Activated CD8-positive, alpha-beta T cell treated with anti-CD3 and anti-CD28 coated beads, Interleukin-2, amount 10 ng/mL, durations not matched to agents 7 days and 5 days (primary cell): ENCODE measurements at regions of chr1 and their contacts with region 1.

Region 1: GRCh38 chr1:36516372-36517325 is 33.9 kb upstream of the CSF3R start:
- DNase-seq: peak; percentile 57
- ATAC-seq: peak; percentile 72
- H3K4me3 Mint-ChIP-seq: no peak overlapping the region
- H3K27ac Mint-ChIP-seq: no peak overlapping the region
- H3K4me1 Mint-ChIP-seq: peaks cover 14% of the 10 kb centered on the region
- H3K27me3 Mint-ChIP-seq: no peaks in the 10 kb centered on the region

Region 2: GRCh38 chr1:36486436-36487335 is 30.0 kb before region 1 on chr1:
- CTCF ChIA-PET with region 1: interaction called, 15 read pairs
- POLR2A ChIA-PET with region 1: no interaction called
- DNase-seq: no peak
- ATAC-seq: no peak
- H3K4me3 Mint-ChIP-seq: no peak overlapping the region
- H3K27ac Mint-ChIP-seq: no peak overlapping the region
- H3K4me1 Mint-ChIP-seq: peaks cover 7% of the 10 kb centered on the region
- H3K27me3 Mint-ChIP-seq: peaks cover 17% of the 10 kb centered on the region

Region 3: DNA sequence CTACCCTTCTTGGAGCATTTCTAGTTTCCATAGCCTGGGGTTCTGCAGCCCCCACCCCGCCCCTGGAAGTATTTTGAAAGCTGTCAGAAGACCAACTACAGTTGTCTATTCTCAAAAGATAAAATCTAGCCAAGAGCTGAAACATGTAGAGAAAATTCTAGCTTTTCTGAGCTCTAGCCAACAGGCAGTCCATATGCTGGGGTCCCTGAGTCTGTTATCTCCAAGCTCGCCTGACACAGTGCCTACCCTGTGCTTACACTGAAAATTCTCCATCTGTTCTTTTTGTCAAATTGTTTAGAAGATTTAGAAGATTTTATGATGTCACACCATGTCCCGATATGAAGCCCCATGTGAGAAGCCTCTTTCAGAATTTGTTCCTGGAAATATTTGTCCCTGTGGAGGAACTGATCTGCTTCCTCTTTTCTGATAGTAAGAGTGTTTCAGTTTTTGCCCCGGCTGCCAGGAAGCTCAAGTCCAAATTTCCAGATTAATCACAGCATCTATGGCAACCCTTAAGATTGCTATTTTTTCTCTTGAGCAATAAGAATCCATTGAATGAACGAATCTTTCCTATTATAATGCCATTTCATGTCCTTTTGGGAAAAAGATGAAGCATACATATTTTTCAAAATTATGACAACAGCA is 10.3 kb before region 1 on chr1:
- CTCF ChIA-PET with region 1: interaction called, 24 read pairs
- POLR2A ChIA-PET with region 1: no interaction called
- DNase-seq: no peak
- ATAC-seq: no peak
- H3K4me3 Mint-ChIP-seq: no peak overlapping the region
- H3K27ac Mint-ChIP-seq: no peak overlapping the region
- H3K4me1 Mint-ChIP-seq: no peaks in the 10 kb centered on the region
- H3K27me3 Mint-ChIP-seq: peaks cover 20% of the 10 kb centered on the region

Region 4: GRCh38 chr1:36534711-36535412 is 18.2 kb after region 1 on chr1:
- CTCF ChIA-PET with region 1: interaction called, 13 read pairs
- POLR2A ChIA-PET with region 1: no interaction called
- DNase-seq: no peak
- ATAC-seq: no peak
- H3K4me3 Mint-ChIP-seq: no peak overlapping the region
- H3K27ac Mint-ChIP-seq: no peak overlapping the region
- H3K4me1 Mint-ChIP-seq: no peaks in the 10 kb centered on the region
- H3K27me3 Mint-ChIP-seq: peaks cover 22% of the 10 kb centered on the region

Region 5: GRCh38 chr1:36553591-36554322 is 37.1 kb after region 1 on chr1:
- CTCF ChIA-PET with region 1: interaction called, 14 read pairs
- POLR2A ChIA-PET with region 1: no interaction called
- DNase-seq: peak; percentile 78
- ATAC-seq: peak; percentile 92
- H3K4me3 Mint-ChIP-seq: no peak overlapping the region
- H3K27ac Mint-ChIP-seq: no peak overlapping the region
- H3K4me1 Mint-ChIP-seq: no peaks in the 10 kb centered on the region
- H3K27me3 Mint-ChIP-seq: peaks cover 34% of the 10 kb centered on the region